BJ (cell line): ENCODE measurements at regions of chr9 and their contacts with region 1.

Region 1: GRCh38 chr9:129139993-129140396 is 28.8 kb downstream of the PTPA start:
- DNase-seq: peak; percentile 96
- H3K4me3 ChIP-seq: peak overlapping the region; percentile 52
- H3K27me3 ChIP-seq: no peaks in the 10 kb centered on the region
- CTCF ChIP-seq: no peak

Region 2: GRCh38 chr9:129125476-129125875 is 14.5 kb before region 1 on chr9:
- CTCF ChIA-PET with region 1: interaction called, 46 read pairs
- POLR2A ChIA-PET with region 1: no interaction called
- DNase-seq: no peak
- H3K4me3 ChIP-seq: no peak overlapping the region
- H3K27me3 ChIP-seq: no peaks in the 10 kb centered on the region
- CTCF ChIP-seq: no peak

Region 3: DNA sequence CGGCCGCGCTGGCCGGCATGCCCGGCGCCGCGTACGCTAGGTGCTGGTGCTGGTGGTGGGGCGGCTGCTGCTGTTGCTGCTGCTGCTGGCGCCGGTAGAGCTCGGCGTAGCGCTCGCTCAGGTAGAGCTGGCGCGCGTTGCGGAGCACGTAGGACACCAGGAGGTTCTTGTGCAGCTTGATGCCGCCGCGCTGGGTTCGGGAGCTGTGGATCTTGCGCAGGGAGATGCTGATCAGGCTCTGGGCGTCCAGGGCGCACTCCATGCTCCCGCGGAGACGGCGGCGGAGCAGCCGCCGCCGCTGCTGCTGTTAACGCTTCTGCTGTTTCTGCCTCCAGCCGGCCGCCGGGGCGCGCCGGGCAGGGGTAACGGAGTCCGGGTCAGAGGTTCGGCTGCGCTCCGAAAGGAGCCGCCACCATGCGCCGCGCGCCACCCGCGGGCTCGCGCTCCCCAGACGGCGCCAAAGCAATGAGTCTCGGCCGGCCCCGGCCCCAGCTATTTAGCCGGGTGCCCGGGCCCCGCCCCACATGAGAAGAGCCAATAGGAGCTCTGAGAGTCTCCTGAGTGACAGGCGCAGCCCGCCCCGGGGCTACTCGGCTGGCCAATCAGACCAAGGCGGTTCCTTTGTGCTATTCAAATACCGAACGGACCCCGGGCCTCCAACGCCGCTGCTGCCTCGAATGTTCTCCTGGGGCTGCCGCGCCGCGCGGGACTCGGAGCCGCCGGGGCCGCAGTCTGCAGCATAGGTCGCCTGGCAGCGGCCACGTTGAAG is 38.0 kb after region 1 on chr9 and contains the start of gene IER5L:
- CTCF ChIA-PET with region 1: interaction called, 335 read pairs
- POLR2A ChIA-PET with region 1: interaction called, 16 read pairs
- DNase-seq: no peak
- H3K4me3 ChIP-seq: peak within 1 kb of the TSS; percentile 95
- H3K27me3 ChIP-seq: no peaks in the 10 kb centered on the region
- CTCF ChIP-seq: no peak
- polyA plus RNA-seq, gene IER5L: 7.3 and 8.7 TPM in 2 replicates

Region 4: GRCh38 chr9:129495534-129496325 is 355.7 kb after region 1 on chr9:
- CTCF ChIA-PET with region 1: interaction called, 40 read pairs
- POLR2A ChIA-PET with region 1: interaction called, 7 read pairs
- DNase-seq: no peak
- H3K4me3 ChIP-seq: peak overlapping the region; percentile 82
- H3K27me3 ChIP-seq: no peaks in the 10 kb centered on the region
- CTCF ChIP-seq: no peak

Region 5: GRCh38 chr9:129610473-129611301 is 470.7 kb after region 1 on chr9:
- CTCF ChIA-PET with region 1: interaction called, 44 read pairs
- POLR2A ChIA-PET with region 1: no interaction called
- DNase-seq: no peak
- H3K4me3 ChIP-seq: peak overlapping the region; percentile 51
- H3K27me3 ChIP-seq: no peaks in the 10 kb centered on the region
- CTCF ChIP-seq: peak; percentile 90

Region 6: GRCh38 chr9:129626079-129626624 is 486.2 kb after region 1 on chr9 and contains the start of gene NTMT1:
- CTCF ChIA-PET with region 1: interaction called, 258 read pairs
- POLR2A ChIA-PET with region 1: interaction called, 3 read pairs
- DNase-seq: no peak
- H3K4me3 ChIP-seq: peak within 1 kb of the TSS; percentile 88
- H3K27me3 ChIP-seq: no peaks in the 10 kb centered on the region
- CTCF ChIP-seq: no peak
- polyA plus RNA-seq, gene NTMT1: 77.1 and 96.3 TPM in 2 replicates

Region 7: DNA sequence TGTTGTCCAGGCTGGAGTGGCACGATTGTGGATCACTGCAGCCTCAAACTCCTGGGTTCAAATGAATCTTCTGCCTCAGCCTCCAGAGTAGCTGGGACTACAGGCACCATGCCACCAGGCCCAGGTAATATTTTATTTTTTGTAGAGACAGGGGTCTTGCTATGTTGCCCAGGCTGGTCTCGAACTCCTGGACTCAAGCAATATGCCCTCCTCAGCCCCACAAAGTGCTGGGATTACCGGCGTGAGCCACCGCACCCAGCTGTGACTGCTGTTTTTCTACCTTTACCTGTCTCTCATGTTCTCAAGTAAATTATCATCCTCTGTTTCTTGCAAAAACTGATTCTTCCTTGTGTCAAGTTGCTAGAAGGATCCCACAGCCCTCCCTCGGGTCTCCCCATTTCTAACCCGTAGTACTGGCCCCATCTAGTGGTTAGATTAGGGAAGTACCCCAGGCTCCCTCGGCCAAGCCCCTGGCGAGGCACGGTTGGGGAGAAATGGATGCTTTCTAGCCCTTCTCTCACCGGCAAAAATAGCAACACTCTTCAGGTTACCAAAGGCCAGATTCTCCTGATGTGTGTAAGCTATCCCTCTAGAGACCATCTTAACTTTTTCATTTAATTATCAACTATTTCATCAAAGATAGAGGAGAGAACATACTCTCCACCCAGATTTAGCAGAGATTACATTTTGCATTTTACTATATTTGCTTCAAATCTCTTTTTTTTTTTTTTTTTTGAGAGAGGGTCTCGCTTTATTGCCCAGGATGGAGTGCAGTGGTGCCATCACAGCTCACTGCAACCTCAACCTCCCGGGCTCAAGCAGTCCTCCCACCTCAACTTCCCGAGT is 643.7 kb after region 1 on chr9:
- CTCF ChIA-PET with region 1: interaction called, 10 read pairs
- POLR2A ChIA-PET with region 1: no interaction called
- DNase-seq: no peak
- H3K4me3 ChIP-seq: no peak overlapping the region
- H3K27me3 ChIP-seq: no peaks in the 10 kb centered on the region
- CTCF ChIP-seq: peak; percentile 92